ENCODE measurements at regions of chr6 and their contacts with region 1.

Region 1: GRCh38 chr6:118283766-118284165 is 264.3 kb upstream of the PLN start:
- DNase-seq: peak; percentile 39
- ATAC-seq: peak; percentile 69 to 72

Region 2: DNA sequence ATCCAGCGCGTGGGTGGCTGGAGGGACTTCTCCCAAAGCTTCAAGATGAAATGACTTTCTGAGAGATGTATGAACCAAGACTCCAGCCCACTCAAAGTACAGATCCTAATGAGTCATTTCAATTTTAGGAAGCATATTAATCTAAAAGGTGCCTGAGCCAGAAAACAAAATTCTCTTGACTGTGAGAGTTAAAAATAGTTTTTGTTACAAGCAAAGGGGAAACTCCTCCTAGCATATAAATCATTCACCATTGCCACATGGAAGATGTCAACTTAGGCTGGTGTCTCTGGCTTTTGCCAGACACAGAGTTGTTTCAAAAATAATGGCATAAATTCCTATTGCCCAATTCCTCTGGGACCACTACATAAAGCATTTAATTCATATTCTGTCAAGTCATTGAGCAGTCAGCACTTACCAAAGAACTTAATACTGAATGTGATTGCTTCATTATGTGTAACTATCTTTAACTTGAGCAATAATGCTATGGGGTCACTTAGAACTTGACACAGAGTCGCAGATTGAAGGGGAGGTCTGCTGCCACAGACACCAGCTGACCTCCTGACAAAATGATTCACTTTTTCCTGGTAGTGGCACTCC is 96.1 kb before region 1 on chr6:
- intact Hi-C with region 1: no loop called
- DNase-seq: peak; percentile 22
- ATAC-seq: peak; percentile 78 to 88

Region 3: GRCh38 chr6:118509009-118509617 is 225.3 kb after region 1 on chr6:
- intact Hi-C with region 1: loop called (anchors 2 to 10 kb)
- DNase-seq: no peak
- ATAC-seq: no peak

Region 4: DNA sequence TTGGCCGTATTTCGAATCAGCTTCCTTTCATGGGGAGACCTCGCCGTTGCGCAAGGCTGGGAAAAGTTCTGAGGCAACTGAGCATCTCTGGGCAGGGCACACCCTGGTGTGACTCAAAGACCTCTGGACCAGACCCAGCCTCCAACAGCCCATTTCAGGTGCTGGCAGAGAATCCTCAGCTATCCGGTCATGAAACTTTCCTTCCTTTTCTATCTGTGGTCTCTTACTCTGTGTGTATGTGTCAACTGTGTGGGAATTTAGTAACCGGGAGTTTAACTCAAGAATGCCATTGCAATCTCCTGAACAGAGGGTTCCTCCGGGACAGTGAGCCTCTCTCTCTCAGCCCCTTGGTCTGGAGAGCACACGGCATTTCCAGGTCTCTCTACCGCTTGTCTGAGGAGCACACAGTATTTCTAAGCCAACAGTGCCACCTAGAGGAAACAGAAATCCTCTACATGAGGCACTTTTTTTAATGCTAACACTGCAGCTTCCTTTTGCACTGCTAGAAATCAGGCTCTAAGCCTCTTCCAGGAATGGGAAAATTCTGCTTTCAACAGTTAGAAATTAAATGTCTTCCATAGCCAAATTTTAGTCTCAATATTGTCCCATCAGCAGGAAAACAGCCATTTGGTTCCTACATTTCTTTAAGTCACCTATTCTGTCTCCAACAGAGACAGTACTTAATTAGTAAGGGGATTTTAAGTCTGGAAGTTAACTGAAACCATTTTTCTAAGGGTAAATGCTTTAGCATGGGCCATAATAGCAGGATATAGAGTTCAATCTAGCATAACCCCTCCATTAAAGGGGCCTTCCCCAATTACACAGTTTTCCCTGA is 297.0 kb after region 1 on chr6:
- intact Hi-C with region 1: loop called (anchors 1 to 10 kb)
- DNase-seq: peak; percentile 30
- ATAC-seq: peak; percentile 88 to 93

Region 5: GRCh38 chr6:118776607-118777549 is 493.1 kb after region 1 on chr6:
- intact Hi-C with region 1: loop called in 1 of 2 experiments (anchors 2 kb)
- DNase-seq: peak; percentile 47
- ATAC-seq: peak; percentile 74 to 79

Measured in left cardiac atrium (tissue), 4 donors.